Activated CD4-positive, alpha-beta T cell treated with anti-CD3 and anti-CD28 coated beads for 36 hours (primary cell): ENCODE measurements at regions of chr9 and their contacts with region 1.

Region 1: DNA sequence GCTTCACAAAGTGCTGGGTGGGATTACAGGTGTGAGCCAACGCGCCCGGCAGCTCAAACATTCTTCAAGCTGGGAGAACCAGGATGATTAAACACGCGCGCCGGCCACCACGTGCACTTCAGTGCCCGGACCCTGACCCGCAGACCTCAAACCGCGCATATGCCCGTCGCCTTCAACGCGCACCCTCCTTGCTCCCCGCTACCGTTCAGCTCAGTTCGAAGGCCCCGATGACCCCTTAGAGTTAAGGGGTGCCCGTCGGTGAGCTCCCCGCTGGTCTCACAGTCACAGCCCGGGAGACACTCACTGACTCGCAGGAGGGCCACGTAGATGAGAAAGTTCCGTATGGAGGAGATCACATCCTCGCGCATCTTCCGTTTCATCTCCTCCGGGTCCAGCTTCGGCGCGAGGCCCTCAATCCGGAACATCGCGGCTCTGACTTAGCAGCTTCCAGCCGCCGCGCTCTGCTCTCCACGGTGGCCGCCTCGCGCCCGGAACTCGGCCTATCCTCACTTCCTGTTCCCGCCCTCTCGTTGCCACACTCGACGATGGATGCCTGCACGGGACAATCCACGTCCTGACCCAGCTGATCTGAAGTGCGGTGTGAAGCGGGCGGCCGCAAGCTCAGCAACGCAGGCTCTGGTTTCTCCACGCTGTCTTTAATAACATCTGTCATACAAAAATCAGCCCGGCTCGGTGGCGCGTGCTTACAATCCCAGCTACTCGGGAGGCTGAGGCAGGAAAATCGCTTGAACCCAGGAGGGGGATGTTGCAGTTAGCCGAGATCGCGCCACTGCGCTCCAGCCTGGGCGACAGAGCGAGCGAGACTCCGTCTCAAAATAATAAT is at the start of gene TOMM5:
- DNase-seq: peak; percentile 96
- ATAC-seq: peak; percentile 95
- H3K4me3 Mint-ChIP-seq: peak within 1 kb of the TSS; percentile 100
- H3K27ac Mint-ChIP-seq: peak within 1 kb of the TSS; percentile 98
- H3K4me1 Mint-ChIP-seq: peaks cover 32% of the 10 kb centered on the region
- H3K27me3 Mint-ChIP-seq: peaks cover 9% of the 10 kb centered on the region
- total RNA-seq, gene TOMM5: 118 to 153 TPM

Region 2: GRCh38 chr9:36487482-36488388 is 1104.6 kb before region 1 on chr9:
- CTCF ChIA-PET with region 1: no interaction called
- POLR2A ChIA-PET with region 1: no interaction called
- intact Hi-C with region 1: loop called in 1 of 2 experiments (anchors 5 kb)
- DNase-seq: peak; percentile 95
- ATAC-seq: peak; percentile 93
- H3K4me3 Mint-ChIP-seq: peak overlapping the region; percentile 93
- H3K27ac Mint-ChIP-seq: peak overlapping the region; percentile 99
- H3K4me1 Mint-ChIP-seq: peaks cover 63% of the 10 kb centered on the region
- H3K27me3 Mint-ChIP-seq: no peaks in the 10 kb centered on the region

Region 3: DNA sequence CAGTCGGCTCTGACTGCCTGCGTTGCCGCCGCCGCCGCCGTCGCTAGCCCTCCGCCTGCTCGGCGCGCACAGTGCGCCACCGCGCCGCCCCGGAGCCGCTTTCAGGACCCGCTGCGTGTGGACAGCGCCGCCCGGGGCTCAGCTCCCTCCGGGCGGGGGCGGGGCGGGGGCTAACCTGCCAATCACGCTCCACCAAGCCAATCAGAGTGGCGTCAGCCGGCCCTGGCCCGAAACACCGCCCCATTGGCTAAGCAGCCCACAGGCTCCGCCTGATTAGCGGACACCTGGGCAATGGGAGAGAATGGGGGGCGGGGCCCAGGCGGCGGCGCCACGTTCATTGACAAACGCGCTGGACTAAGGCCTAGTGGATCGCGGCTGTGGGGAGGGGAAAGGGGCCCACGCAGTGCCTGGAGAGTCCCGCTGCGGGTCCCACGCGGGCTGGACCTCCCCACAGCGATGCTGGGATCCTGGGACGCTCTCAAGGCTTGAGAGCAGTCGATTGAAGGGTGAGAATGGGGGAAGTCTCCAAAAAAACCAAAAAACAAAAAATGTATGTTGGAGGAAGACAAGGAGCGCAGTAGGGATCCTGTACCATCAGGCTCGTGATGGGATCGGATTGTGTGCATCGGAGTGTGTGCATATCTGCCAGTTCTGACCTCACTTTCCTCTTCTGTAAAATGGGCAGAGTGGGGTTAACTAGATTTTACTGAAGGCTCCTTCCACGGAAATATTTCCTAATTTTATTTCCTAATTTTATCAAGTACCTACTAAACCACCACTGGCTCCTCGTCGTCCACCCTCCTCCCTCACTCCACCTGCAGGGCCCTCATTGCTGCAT is 564.5 kb before region 1 on chr9:
- CTCF ChIA-PET with region 1: no interaction called
- POLR2A ChIA-PET with region 1: no interaction called
- intact Hi-C with region 1: loop called in 1 of 2 experiments (anchors 5 kb)
- DNase-seq: peak; percentile 96
- ATAC-seq: peak; percentile 97
- H3K4me3 Mint-ChIP-seq: peak overlapping the region; percentile 64
- H3K27ac Mint-ChIP-seq: no peak overlapping the region
- H3K4me1 Mint-ChIP-seq: peaks cover 37% of the 10 kb centered on the region
- H3K27me3 Mint-ChIP-seq: peaks cover 80% of the 10 kb centered on the region

Region 4: DNA sequence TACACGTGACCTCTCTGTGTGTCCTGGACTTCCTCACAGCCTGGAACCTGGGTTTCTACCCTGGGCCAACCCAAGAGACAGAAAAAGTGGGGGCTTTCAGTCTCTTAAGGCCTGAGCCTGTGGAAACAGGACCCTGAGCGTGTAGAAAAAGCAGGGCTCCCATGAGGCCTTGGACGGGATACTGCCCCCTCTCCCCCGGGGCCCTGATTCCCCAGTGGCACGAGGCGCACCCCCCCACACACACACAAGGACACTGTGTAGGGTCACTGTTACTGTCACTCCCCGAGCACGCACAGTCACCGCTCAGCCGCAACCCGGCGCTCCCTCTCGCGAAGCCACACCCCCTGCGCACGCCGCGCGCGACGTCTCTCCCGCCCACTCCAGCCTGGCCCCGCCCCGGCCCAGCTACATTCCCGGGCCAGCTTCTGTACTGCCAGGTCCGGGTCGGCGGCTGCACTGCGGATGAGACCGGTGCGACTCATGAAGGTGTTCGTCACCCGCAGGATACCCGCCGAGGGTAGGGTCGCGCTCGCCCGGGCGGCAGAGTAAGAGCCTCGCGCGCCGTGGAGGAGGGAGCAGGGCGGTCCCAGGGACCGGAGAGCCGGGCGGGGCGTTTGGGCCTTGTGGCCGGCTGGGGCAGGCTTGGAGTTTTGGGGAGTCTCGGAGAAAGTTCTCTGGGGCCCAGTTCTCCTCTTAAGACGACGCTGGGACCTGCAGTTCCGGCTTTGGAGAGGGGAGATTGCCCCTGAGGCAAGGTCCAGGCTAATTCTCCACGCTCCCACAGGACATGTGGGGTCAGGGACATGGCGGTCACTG is 169.8 kb before region 1 on chr9 and contains the start of gene GRHPR:
- CTCF ChIA-PET with region 1: no interaction called
- POLR2A ChIA-PET with region 1: no interaction called
- intact Hi-C with region 1: loop called (anchors 2 to 5 kb)
- DNase-seq: peak; percentile 95
- ATAC-seq: peak; percentile 99
- H3K4me3 Mint-ChIP-seq: peak within 1 kb of the TSS; percentile 91
- H3K27ac Mint-ChIP-seq: peak within 1 kb of the TSS; percentile 95
- H3K4me1 Mint-ChIP-seq: peaks cover 25% of the 10 kb centered on the region
- H3K27me3 Mint-ChIP-seq: no peaks in the 10 kb centered on the region
- total RNA-seq, gene GRHPR: 69.1 to 74.4 TPM

Region 5: GRCh38 chr9:37565661-37566618 is 26.4 kb before region 1 on chr9:
- CTCF ChIA-PET with region 1: no interaction called
- POLR2A ChIA-PET with region 1: no interaction called
- intact Hi-C with region 1: loop called in 1 of 2 experiments (anchors 2 kb)
- DNase-seq: no peak
- ATAC-seq: no peak
- H3K4me3 Mint-ChIP-seq: no peak overlapping the region
- H3K27ac Mint-ChIP-seq: no peak overlapping the region
- H3K4me1 Mint-ChIP-seq: no peaks in the 10 kb centered on the region
- H3K27me3 Mint-ChIP-seq: no peaks in the 10 kb centered on the region

Region 6: GRCh38 chr9:37753489-37754190 is 161.3 kb after region 1 on chr9 and contains the start of gene TRMT10B:
- CTCF ChIA-PET with region 1: no interaction called
- POLR2A ChIA-PET with region 1: no interaction called
- intact Hi-C with region 1: loop called (anchors 1 to 5 kb)
- DNase-seq: peak; percentile 88
- ATAC-seq: peak; percentile 94
- H3K4me3 Mint-ChIP-seq: peak within 1 kb of the TSS; percentile 91
- H3K27ac Mint-ChIP-seq: peak within 1 kb of the TSS; percentile 92
- H3K4me1 Mint-ChIP-seq: peaks cover 32% of the 10 kb centered on the region
- H3K27me3 Mint-ChIP-seq: no peaks in the 10 kb centered on the region
- total RNA-seq, gene TRMT10B: 12.3 to 15.6 TPM

Region 7: DNA sequence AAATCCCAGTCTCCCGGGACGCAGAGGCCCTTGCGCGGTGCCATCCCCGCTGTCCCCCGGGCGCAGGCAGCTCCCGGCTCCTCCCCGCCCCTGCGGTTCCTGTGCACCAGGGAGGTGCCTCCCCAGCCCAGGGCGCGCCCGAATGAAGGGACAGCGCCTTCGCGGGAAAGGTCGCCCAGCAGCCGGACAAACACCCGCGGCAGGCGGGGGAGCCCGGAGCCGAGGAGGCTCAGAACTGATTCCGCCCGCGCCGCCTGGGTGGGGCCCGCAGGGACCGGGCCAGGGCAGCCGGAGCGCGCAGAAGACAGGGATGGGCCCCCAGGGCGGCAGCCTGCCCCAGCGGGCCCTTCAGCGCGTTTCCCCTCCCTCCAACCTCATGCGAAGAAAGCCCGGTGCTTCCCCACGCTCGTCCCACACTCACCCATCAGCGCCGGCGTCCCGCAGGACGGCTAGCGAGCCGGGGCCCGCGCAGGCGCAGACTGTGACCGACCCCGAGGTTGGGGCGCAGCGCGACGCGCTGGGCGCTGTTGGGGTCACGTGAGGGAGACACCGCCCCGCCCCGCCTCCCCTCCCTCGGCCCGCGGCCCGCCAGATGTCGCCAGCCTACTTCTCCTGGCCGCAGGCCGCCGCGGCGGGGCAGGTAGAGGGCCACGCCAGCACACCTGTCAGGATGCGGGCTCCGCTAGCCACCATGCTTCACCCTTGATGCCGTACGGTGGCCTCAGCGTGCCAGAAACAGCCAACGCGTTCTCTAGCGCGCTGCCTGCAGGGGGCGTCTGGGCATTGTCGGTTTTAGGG is 311.5 kb after region 1 on chr9 and contains the start of gene SLC25A51:
- CTCF ChIA-PET with region 1: no interaction called
- POLR2A ChIA-PET with region 1: no interaction called
- intact Hi-C with region 1: loop called (anchors 2 to 10 kb)
- DNase-seq: peak; percentile 96
- ATAC-seq: peak; percentile 86
- H3K4me3 Mint-ChIP-seq: peak within 1 kb of the TSS; percentile 85
- H3K27ac Mint-ChIP-seq: peak within 1 kb of the TSS; percentile 89
- H3K4me1 Mint-ChIP-seq: peaks cover 11% of the 10 kb centered on the region
- H3K27me3 Mint-ChIP-seq: no peaks in the 10 kb centered on the region
- total RNA-seq, gene SLC25A51: 25.5 to 29.4 TPM